Left ventricle myocardium inferior (tissue), 1 donor: ENCODE measurements at regions of chr3 and their contacts with region 1.

Region 1: GRCh38 chr3:42755681-42756578 is 17.1 kb downstream of the CCDC13 start:
- DNase-seq: no peak
- H3K4me3 ChIP-seq: no peak overlapping the region
- H3K27ac ChIP-seq: no peak overlapping the region
- H3K4me1 ChIP-seq: no peaks in the 10 kb centered on the region
- H3K27me3 ChIP-seq: no peaks in the 10 kb centered on the region
- CTCF ChIP-seq: peak; percentile 58

Region 2: GRCh38 chr3:42581709-42582473 is 174.0 kb before region 1 on chr3 and contains the start of gene SEC22C:
- intact Hi-C with region 1: loop called (anchors 10 kb)
- DNase-seq: peak; percentile 95
- H3K4me3 ChIP-seq: peak within 1 kb of the TSS; percentile 89
- H3K27ac ChIP-seq: peak within 1 kb of the TSS; percentile 91
- H3K4me1 ChIP-seq: peaks cover 32% of the 10 kb centered on the region
- H3K27me3 ChIP-seq: no peaks in the 10 kb centered on the region
- CTCF ChIP-seq: peak; percentile 41
- total RNA-seq, gene SEC22C: 23.0 TPM